ENCODE measurements at regions of chr17 and their contacts with region 1.

Region 1: GRCh38 chr17:79844869-79845600 is 5.8 kb upstream of the CBX4 start:
- DNase-seq: peak; percentile 87
- H3K4me3 Mint-ChIP-seq: no peak overlapping the region
- H3K27ac Mint-ChIP-seq: no peak overlapping the region
- H3K4me1 Mint-ChIP-seq: peaks cover 11% of the 10 kb centered on the region
- H3K27me3 Mint-ChIP-seq: peaks cover 53% of the 10 kb centered on the region

Region 2: DNA sequence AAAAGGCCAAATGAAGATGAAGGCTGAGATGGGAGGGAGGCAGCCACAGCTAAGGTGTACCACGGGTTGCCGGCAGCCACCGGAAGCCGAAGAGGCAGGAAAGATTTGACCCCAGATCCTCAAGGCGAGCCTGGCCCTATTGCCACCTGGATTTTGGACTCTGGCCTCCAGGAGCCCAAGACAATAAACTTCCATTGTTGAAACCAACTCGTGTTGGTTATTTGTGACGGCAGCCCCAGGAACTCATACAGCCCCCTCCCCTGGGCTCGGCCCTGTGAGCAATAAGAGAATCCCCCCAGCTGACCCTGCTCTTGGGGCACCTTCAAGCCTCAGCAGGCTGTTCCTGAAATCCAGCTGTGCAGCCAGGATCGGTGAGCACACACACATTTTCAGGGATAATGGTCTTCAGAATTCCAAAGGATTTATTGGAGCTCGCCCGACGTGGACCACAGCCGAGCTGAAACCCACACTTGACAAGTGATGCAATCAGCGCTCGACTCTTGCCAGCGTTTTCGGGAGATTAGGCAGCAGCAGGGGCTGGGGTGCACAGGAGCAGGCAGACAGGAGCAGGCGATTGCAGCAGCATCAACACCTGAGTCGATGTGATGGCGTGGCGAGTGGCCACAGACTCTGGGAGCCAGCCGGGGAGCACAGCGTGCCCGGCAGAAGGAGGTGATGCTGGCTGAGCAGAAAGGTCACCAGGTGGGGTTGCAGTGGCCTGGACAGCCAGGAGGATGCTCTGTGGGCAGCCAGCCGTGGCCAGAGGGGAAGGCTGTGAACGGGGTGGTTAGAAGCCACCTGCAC is 16.6 kb after region 1 on chr17:
- intact Hi-C with region 1: no loop called
- DNase-seq: no peak
- H3K4me3 Mint-ChIP-seq: no peak overlapping the region
- H3K27ac Mint-ChIP-seq: no peak overlapping the region
- H3K4me1 Mint-ChIP-seq: peaks cover 3% of the 10 kb centered on the region
- H3K27me3 Mint-ChIP-seq: peaks cover 12% of the 10 kb centered on the region

Region 3: GRCh38 chr17:79923974-79924638 is 79.1 kb after region 1 on chr17:
- intact Hi-C with region 1: loop called (anchors 5 kb)
- DNase-seq: peak; percentile 84
- H3K4me3 Mint-ChIP-seq: no peak overlapping the region
- H3K27ac Mint-ChIP-seq: no peak overlapping the region
- H3K4me1 Mint-ChIP-seq: peaks cover 9% of the 10 kb centered on the region
- H3K27me3 Mint-ChIP-seq: peaks cover 7% of the 10 kb centered on the region

Measured in activated CD4-positive, alpha-beta T cell treated with anti-CD3 and anti-CD28 coated beads, Interleukin-2, amount 10 ng/mL, durations not matched to agents 24 days and 14 days (primary cell).